ENCODE measurements at regions of chr11 and their contacts with region 1.

Region 1: GRCh38 chr11:62905927-62906531 is 15.1 kb downstream of the CHRM1 start:
- DNase-seq: peak; percentile 75 to 98 (median 90)

Region 2: GRCh38 chr11:62999649-63000048 is 93.6 kb after region 1 on chr11:
- intact Hi-C with region 1: no loop called
- DNase-seq: peak in 1 of 10 donors; percentile 62

Region 3: GRCh38 chr11:63023841-63024648 is 118.0 kb after region 1 on chr11:
- intact Hi-C with region 1: loop called (anchors 1 kb)
- DNase-seq: peak; percentile 80 to 98 (median 94)

Measured in posterior cingulate gyrus (tissue), 11 donors.